SK-N-SH (cell line): ENCODE measurements at regions of chr6 and their contacts with region 1.

Region 1: GRCh38 chr6:157059781-157060180 is 263.5 kb downstream of the TMEM242 start:
- DNase-seq: no peak
- H3K4me3 ChIP-seq: no peak overlapping the region
- H3K27ac ChIP-seq: peak overlapping the region in 1 of 2 experiments; percentile 53; a peak in 2 of 4 replicates
- H3K4me1 ChIP-seq: peaks cover 12 to 18% of the 10 kb centered on the region in 2 experiments; a peak in 3 of 4 replicates
- H3K27me3 ChIP-seq: no peaks in the 10 kb centered on the region
- CTCF ChIP-seq: no peak
- EP300 ChIP-seq: no peak
- RAD21 ChIP-seq: no peak

Region 2: DNA sequence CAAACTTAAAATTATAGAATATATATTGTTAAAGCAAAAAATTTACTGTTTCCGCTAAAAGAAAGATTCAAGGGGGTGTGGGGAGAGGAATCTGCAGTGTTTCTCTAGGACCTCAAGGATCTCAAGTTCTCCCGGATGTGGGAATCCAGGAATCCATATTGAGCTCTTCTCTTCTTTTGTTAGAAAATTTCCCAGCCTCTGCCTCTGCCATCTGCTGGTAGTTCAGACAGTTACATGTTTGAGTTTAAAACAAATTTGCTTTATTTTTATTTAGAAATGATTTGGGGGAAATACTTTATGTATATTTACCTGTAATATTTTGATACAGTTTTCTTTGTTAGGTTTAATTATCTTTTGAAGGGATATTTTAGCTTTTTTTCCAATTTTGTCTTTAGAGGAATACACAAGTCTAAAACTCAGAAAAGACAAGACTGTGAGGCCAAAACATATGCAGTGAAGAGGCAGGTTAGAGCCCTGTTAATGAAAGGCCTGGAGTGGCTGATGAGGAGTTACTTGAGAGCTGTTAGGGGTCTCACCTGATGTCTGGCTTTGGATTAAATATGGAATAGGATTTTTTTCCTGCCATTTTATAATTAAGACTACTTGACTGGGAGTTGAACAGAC is 13.8 kb before region 1 on chr6:
- CTCF ChIA-PET with region 1: interaction called, 24 read pairs
- POLR2A ChIA-PET with region 1: no interaction called
- DNase-seq: peak; percentile 54
- H3K4me3 ChIP-seq: no peak overlapping the region
- H3K27ac ChIP-seq: peak overlapping the region; percentile 30 to 50; a peak in 3 of 4 replicates
- H3K4me1 ChIP-seq: peaks cover 11 to 16% of the 10 kb centered on the region in 2 experiments; a peak in 3 of 4 replicates
- H3K27me3 ChIP-seq: no peaks in the 10 kb centered on the region
- CTCF ChIP-seq: peak; percentile 73
- EP300 ChIP-seq: no peak
- RAD21 ChIP-seq: peak; percentile 66